Mammary epithelial cell (primary cell): ENCODE measurements at regions of chr17 and their contacts with region 1.

Region 1: GRCh38 chr17:40559954-40560591 is 5.2 kb downstream of the CCR7 start:
- DNase-seq: peak; percentile 90
- H3K4me3 ChIP-seq: no peak overlapping the region
- H3K27ac ChIP-seq: peak overlapping the region; percentile 30
- H3K4me1 ChIP-seq: peaks cover 15% of the 10 kb centered on the region
- H3K27me3 ChIP-seq: no peaks in the 10 kb centered on the region
- CTCF ChIP-seq: peak; percentile 99

Region 2: GRCh38 chr17:40399185-40399584 is 160.9 kb before region 1 on chr17:
- CTCF ChIA-PET with region 1: no interaction called
- dilution Hi-C with region 1: no loop called
- in situ Hi-C with region 1: no loop called
- intact Hi-C with region 1: loop called (anchors 1 kb)
- DNase-seq: no peak
- H3K4me3 ChIP-seq: no peak overlapping the region
- H3K27ac ChIP-seq: no peak overlapping the region
- H3K4me1 ChIP-seq: no peaks in the 10 kb centered on the region
- H3K27me3 ChIP-seq: no peaks in the 10 kb centered on the region
- CTCF ChIP-seq: peak; percentile 39 to 53

Region 3: GRCh38 chr17:40450175-40450574 is 109.9 kb before region 1 on chr17:
- CTCF ChIA-PET with region 1: no interaction called
- dilution Hi-C with region 1: loop called (anchors 5 kb)
- in situ Hi-C with region 1: no loop called
- intact Hi-C with region 1: no loop called
- DNase-seq: peak; percentile 39
- H3K4me3 ChIP-seq: no peak overlapping the region
- H3K27ac ChIP-seq: no peak overlapping the region
- H3K4me1 ChIP-seq: peaks cover 16% of the 10 kb centered on the region
- H3K27me3 ChIP-seq: no peaks in the 10 kb centered on the region
- CTCF ChIP-seq: peak; percentile 62 to 67

Region 4: DNA sequence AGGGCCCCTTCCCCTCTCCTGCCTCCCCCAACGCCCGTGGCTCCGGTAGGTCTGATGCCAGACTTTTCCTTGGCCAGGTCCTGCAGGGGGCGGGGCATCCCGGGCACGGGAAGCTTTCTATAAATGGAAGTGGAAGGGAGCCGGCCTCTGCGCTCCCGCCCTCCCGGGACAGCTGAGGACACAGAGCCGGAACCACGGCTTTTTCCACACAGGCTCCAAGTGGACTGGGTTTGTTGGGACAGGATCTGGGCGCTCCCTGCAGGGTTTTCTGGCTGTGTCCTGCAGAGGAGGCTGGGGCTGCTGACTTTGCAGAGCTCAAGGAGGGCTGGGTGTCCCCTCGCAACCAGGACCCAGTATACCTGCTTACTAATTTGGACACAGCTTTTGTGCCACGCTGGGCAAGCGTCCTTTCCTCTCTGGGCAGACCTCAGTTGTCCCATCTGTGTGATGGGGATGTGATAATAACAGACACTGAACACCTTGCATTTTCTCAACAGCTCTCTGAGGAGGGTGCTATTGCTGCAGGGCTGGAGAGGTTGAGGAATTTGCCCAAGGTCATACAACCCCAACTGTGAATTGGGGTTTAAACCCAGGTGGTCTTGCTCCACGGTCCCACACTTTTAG is 60.4 kb before region 1 on chr17:
- CTCF ChIA-PET with region 1: interaction called, 7 read pairs
- dilution Hi-C with region 1: no loop called
- in situ Hi-C with region 1: no loop called
- intact Hi-C with region 1: loop called (anchors 1 kb)
- DNase-seq: peak; percentile 71
- H3K4me3 ChIP-seq: peak overlapping the region; percentile 69 to 98 (median 77)
- H3K27ac ChIP-seq: peak overlapping the region; percentile 96
- H3K4me1 ChIP-seq: peaks cover 37% of the 10 kb centered on the region
- H3K27me3 ChIP-seq: no peaks in the 10 kb centered on the region
- CTCF ChIP-seq: peak in 1 of 2 donors; percentile 16

Region 5: GRCh38 chr17:40602775-40603551 is 42.9 kb after region 1 on chr17:
- CTCF ChIA-PET with region 1: no interaction called
- dilution Hi-C with region 1: loop called (anchors 5 kb)
- in situ Hi-C with region 1: no loop called
- intact Hi-C with region 1: no loop called
- DNase-seq: no peak
- H3K4me3 ChIP-seq: no peak overlapping the region
- H3K27ac ChIP-seq: no peak overlapping the region
- H3K4me1 ChIP-seq: no peaks in the 10 kb centered on the region
- H3K27me3 ChIP-seq: no peaks in the 10 kb centered on the region
- CTCF ChIP-seq: no peak